ENCODE measurements at regions of chr17 and their contacts with region 1.

Region 1: DNA sequence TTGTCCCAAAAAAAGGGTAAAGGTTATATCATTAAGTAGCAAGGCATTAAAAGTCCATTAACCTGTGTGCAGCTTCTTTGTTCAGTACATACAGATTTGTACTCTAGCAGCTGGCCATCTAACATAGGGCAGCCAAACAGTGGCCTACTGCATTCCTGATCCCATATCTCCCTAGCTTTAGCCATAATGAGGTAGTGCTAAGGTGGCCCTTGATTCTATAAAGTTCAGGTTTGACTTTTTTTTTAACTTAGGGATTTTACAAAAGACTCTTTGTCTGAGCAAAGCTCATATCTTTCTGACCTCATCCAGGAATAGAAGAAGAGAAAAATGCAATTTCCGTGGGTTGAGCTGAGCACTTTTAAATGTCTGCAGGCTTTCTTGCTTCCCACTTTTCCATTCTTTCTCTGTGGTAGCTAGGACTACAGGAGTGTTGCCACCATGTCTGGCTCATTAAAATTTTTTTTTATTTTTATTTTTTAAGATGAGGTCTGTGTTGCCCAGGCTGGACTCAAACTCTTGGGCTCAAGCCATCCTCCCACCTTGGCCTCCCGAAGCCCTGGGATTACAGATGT is 19.5 kb upstream of the CDC6 start:
- DNase-seq: no peak
- H3K4me3 ChIP-seq: no peak overlapping the region
- CTCF ChIP-seq: no peak

Region 2: GRCh38 chr17:40281663-40282062 is 13.4 kb after region 1 on chr17:
- CTCF ChIA-PET with region 1: interaction called, 11 read pairs
- POLR2A ChIA-PET with region 1: no interaction called
- DNase-seq: no peak
- H3K4me3 ChIP-seq: no peak overlapping the region
- CTCF ChIP-seq: no peak